CD8-positive, alpha-beta T cell (primary cell): ENCODE measurements at regions of chr1 and their contacts with region 1.

Region 1: GRCh38 chr1:166910396-166910994 is 34.4 kb upstream of the TADA1 start:
- DNase-seq: peak; percentile 44 to 92 (median 75)
- ATAC-seq: peak; percentile 100
- H3K4me3 ChIP-seq: no peak overlapping the region
- H3K4me3 Mint-ChIP-seq: no peak overlapping the region
- H3K27ac ChIP-seq: no peak overlapping the region
- H3K27ac Mint-ChIP-seq: no peak overlapping the region
- H3K4me1 ChIP-seq: no peaks in the 10 kb centered on the region
- H3K4me1 Mint-ChIP-seq: peaks cover 2% of the 10 kb centered on the region
- H3K27me3 ChIP-seq: no peaks in the 10 kb centered on the region
- H3K27me3 Mint-ChIP-seq: peaks cover 5% of the 10 kb centered on the region
- CTCF ChIP-seq: peak; percentile 87

Region 2: DNA sequence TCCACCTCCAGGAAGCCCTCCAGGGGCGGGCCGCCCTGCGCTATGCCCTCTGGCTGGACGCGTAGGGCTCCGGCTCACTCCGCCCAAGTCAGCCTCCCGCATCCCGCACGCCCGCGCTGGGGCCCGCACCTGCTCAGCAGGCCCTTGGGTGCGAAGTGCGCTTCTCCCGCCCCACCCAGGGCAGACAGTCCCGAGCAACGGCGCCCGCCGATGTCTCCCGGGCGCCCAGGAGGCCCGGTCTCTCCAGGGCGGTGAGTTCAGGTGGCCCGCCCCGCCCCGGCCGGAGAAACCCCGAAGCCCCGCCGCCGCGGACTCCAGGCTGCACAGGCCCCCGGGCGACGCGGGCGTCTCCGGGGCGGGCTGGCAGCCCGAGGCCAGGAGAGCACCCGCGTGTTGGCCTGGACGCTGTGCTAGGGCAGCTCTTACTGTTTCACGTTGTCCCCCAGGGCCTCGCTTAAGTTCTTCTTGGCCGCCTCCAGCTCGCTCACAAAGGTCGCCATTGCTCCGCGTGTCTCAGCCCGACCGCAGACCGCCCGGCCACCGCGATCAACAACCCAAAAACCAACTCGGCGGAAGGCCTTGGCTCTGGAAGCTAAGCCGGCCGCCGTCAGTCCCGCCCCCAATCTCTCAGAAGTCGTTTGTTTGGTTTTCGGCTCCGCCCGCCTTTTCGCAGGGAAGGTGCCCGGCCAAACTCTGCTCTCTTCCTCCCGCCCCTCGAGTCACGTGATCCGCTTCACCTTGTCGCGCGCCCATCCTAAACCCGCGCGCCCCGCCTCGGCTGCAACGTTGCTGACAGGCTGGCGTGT is 34.6 kb before region 1 on chr1 and contains the start of gene TADA1:
- CTCF ChIA-PET with region 1: interaction called, 4 read pairs
- POLR2A ChIA-PET with region 1: no interaction called
- intact Hi-C with region 1: loop called in 1 of 2 experiments (anchors 1 kb)
- DNase-seq: peak; percentile 96 to 99 (median 98)
- ATAC-seq: peak; percentile 90
- H3K4me3 ChIP-seq: peak within 1 kb of the TSS; percentile 71 to 84
- H3K4me3 Mint-ChIP-seq: peak within 1 kb of the TSS; percentile 97
- H3K27ac ChIP-seq: peak within 1 kb of the TSS; percentile 74 to 79
- H3K27ac Mint-ChIP-seq: peak within 1 kb of the TSS; percentile 99
- H3K4me1 ChIP-seq: peaks cover 18% of the 10 kb centered on the region
- H3K4me1 Mint-ChIP-seq: peaks cover 49% of the 10 kb centered on the region
- H3K27me3 ChIP-seq: no peaks in the 10 kb centered on the region
- H3K27me3 Mint-ChIP-seq: no peaks in the 10 kb centered on the region
- CTCF ChIP-seq: no peak
- total RNA-seq, gene TADA1: 16.7 to 18.5 TPM

Region 3: DNA sequence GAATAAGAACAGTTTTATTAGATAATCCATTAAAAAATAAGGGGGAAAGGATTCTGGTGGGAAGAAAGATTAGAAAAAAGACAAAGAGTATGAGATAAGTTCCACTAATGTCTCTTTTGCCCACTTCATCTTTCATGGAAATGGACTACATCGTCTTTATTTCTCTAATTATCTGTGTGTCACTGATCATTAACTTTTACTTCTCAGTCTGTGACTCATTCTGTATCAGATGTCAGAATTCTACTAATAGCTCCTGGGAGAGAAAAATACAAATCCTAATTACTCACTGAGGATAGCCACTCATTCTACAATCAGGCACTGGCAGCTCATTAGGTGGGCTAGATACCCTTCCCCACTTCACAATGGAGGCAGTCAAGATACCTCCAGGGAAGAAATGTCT is 23.1 kb after region 1 on chr1:
- CTCF ChIA-PET with region 1: interaction called, 10 read pairs
- POLR2A ChIA-PET with region 1: no interaction called
- intact Hi-C with region 1: no loop called
- DNase-seq: no peak
- ATAC-seq: no peak
- H3K4me3 ChIP-seq: no peak overlapping the region
- H3K4me3 Mint-ChIP-seq: no peak overlapping the region
- H3K27ac ChIP-seq: no peak overlapping the region
- H3K27ac Mint-ChIP-seq: no peak overlapping the region
- H3K4me1 ChIP-seq: no peaks in the 10 kb centered on the region
- H3K4me1 Mint-ChIP-seq: no peaks in the 10 kb centered on the region
- H3K27me3 ChIP-seq: no peaks in the 10 kb centered on the region
- H3K27me3 Mint-ChIP-seq: no peaks in the 10 kb centered on the region
- CTCF ChIP-seq: no peak

Region 4: DNA sequence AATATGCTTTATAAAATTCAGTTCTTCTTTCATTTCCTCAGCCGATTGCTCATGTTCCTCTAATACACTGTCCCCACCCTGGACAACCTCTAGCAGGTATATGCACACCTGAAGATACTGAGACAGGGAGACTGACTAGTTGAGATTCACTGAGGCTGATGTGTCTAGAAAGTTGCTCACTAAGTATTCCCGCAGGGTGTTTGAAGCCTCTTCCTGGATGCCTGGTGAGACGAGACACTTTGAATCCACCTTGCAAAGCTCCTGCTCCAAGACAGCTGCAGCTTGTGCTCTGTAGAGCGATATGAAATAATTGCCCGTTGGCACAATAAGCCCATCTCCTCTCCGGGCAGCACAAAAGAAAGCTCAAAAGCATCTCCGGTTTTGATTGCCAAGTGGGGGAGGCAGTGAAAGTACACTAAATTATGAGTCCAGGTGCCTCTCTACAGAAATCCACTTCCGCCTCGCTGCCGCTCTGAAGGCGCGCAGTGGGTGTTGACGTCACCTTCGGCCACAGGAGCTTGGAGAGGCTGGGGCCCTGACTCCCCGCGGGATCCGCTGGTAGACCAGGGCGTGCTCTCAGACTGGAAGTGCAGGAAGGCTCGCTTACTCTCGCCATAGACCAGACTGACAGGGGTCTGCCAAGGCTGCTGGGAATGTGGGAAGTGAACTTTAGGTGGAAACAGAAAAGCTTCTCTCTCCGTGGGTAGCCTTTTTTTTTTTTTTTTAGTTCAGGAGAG is 133.4 kb after region 1 on chr1:
- CTCF ChIA-PET with region 1: interaction called, 15 read pairs
- POLR2A ChIA-PET with region 1: no interaction called
- intact Hi-C with region 1: no loop called
- DNase-seq: peak; percentile 39 to 85 (median 67)
- ATAC-seq: peak; percentile 97
- H3K4me3 ChIP-seq: peak overlapping the region; percentile 46 to 74
- H3K4me3 Mint-ChIP-seq: peak overlapping the region; percentile 91
- H3K27ac ChIP-seq: peak overlapping the region in 1 of 2 experiments; percentile 19
- H3K27ac Mint-ChIP-seq: peak overlapping the region; percentile 80
- H3K4me1 ChIP-seq: peaks cover 9% of the 10 kb centered on the region
- H3K4me1 Mint-ChIP-seq: peaks cover 17% of the 10 kb centered on the region
- H3K27me3 ChIP-seq: peaks cover 0 to 3% of the 10 kb centered on the region in 2 experiments
- H3K27me3 Mint-ChIP-seq: peaks cover 3% of the 10 kb centered on the region
- CTCF ChIP-seq: no peak

Region 5: DNA sequence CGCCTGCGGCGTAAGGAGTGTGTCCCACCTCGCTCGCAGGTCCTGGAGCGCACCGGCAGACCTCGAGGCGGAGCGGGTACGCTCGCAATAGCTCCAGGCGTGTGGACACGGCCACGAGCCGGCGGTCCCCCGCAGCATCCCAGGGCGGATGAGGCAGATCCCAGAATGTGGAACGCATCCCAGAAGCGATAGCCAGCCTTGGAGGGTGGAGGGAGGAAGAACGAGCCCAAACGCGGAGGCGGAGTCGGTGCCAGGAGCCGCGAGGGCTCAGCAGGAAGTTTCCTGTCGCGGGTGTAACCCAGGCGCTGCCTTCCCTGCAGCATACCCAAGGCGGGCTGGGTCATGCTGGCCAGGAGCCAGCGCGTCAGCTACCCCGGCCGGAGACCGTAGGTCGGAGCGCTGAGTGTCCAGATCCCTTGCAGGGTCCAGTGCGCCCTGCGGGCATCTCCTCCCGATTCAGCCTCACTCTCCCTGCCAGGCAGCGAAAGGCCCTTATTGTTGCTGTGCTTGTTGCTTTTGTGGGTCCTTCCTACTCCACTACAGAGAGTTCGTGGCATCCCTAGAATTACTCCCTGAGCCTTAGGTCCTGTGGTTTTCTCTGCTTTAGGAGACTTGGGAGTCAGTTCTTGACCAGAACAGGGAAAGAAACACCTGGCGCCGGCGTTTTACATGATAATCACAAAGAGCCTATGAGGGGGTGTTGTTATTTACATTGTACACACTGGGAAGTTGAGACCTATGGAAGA is 211.1 kb after region 1 on chr1:
- CTCF ChIA-PET with region 1: interaction called, 17 read pairs
- POLR2A ChIA-PET with region 1: interaction called, 3 read pairs
- intact Hi-C with region 1: loop called in 1 of 2 experiments (anchors 2 kb)
- DNase-seq: peak in 7 of 9 experiments; percentile 11 to 72 (median 40)
- ATAC-seq: peak; percentile 67
- H3K4me3 ChIP-seq: peak overlapping the region; percentile 56 to 72
- H3K4me3 Mint-ChIP-seq: peak overlapping the region; percentile 86
- H3K27ac ChIP-seq: no peak overlapping the region
- H3K27ac Mint-ChIP-seq: no peak overlapping the region
- H3K4me1 ChIP-seq: no peaks in the 10 kb centered on the region
- H3K4me1 Mint-ChIP-seq: peaks cover 6% of the 10 kb centered on the region
- H3K27me3 ChIP-seq: peaks cover 0 to 4% of the 10 kb centered on the region in 2 experiments
- H3K27me3 Mint-ChIP-seq: peaks cover 7% of the 10 kb centered on the region
- CTCF ChIP-seq: no peak

Region 6: DNA sequence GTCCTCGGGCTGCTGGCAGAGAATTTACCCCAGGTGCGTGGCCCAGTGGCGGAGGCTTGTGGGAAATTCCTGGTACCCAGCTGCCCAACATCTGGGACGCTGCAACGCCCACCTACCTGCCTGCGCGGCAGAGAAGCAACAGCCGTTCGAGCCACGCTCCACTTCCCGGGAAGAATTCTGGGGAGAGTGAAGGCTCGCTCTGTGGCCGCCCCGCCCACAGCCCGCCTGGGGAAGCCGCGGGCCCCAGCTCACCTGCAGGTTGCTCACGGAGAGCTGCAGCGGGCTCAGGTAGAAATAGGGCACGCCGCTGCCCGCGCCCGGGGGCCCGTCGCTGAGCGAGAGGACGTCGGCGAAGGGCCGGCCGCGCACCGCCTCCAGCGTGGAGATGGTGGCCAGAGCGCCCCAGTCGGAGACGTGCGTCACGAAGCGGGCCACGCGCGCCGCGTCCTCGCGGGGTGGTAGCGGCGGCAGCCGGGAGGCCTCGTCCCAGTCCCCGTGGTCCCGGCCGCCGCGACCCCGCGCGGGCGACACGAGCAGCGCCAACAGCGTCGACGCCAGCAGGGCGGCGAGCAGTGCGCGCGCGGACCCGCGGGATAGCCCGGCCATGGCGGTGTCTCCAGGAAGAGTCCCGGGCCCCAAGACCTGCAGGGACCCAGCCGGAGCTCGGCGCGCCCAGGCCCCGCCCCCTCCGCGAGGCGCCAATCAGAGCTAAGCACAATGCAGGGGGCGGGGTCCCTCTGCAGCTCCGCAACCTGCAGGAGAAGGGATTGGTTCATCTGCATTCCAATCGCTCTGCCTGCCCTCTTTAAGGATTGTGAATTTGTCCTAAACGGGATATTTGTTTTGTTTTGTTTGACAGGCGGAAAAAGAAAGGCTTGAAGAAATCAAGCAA is 642.9 kb after region 1 on chr1 and contains the start of gene CREG1:
- CTCF ChIA-PET with region 1: interaction called, 7 read pairs
- POLR2A ChIA-PET with region 1: no interaction called
- intact Hi-C with region 1: loop called (anchors 5 kb)
- DNase-seq: peak; percentile 70 to 93 (median 88)
- ATAC-seq: peak; percentile 97
- H3K4me3 ChIP-seq: peak within 1 kb of the TSS; percentile 62 to 70
- H3K4me3 Mint-ChIP-seq: peak within 1 kb of the TSS; percentile 88
- H3K27ac ChIP-seq: peak within 1 kb of the TSS in 1 of 2 experiments; percentile 57
- H3K27ac Mint-ChIP-seq: no peak within 1 kb of the TSS
- H3K4me1 ChIP-seq: peaks cover 18% of the 10 kb centered on the region
- H3K4me1 Mint-ChIP-seq: peaks cover 47% of the 10 kb centered on the region
- H3K27me3 ChIP-seq: no peaks in the 10 kb centered on the region
- H3K27me3 Mint-ChIP-seq: no peaks in the 10 kb centered on the region
- CTCF ChIP-seq: no peak
- total RNA-seq, gene CREG1: 9.3 to 9.8 TPM